ENCODE measurements at regions of chr16 and their contacts with region 1.

Region 1: GRCh38 chr16:68237243-68238028 is 1.5 kb upstream of the ESRP2 start:
- DNase-seq: peak; percentile 98
- H3K4me3 Mint-ChIP-seq: peak overlapping the region; percentile 81
- H3K27ac Mint-ChIP-seq: peak overlapping the region; percentile 94
- H3K4me1 Mint-ChIP-seq: peaks cover 16% of the 10 kb centered on the region
- H3K27me3 Mint-ChIP-seq: no peaks in the 10 kb centered on the region
- CTCF ChIP-seq: no peak

Region 2: DNA sequence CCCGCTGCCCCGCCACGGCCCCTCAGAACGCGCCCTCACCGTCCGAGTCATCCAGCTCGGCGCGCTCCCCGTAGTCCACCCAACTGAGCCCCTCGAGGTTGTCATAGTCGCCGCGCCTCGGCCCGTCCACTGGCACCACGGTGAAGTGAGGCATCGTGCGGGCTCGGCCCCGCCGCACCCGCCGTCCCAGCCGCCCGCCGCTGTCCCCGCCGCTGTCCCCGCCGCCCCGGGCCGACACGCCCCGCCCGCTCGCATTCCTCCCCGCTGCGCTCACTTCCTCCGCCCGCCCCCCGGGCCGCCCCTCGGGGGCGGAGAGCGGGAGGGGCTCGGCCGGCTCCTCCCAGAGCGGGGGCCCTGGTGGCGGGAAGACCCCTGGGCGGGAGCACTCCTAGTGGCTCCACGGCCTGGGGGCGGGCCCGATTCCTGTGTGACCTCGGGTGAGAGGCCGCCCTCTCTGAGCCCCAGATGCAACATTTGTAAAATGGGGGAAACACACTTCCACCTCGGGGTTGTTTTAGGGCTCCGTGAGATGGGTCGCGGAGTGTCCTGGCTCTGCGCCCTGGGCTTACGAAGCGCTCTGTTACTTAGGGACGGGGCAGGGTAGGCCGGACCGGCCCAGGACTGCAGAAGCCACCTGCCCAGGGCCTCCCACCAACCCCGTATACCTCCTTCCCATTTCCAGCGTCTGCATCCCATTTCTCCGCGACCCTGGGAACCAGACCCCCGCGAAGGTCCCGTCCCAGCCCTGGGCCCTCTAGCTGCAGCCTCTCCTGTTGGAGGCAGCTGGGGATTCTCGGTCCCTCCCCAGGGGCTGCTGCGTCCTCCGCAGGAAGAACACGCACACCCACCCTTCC is 268.8 kb before region 1 on chr16 and contains the start of gene SLC12A4:
- CTCF ChIA-PET with region 1: no interaction called
- POLR2A ChIA-PET with region 1: interaction called, 9 read pairs
- intact Hi-C with region 1: loop called (anchors 5 kb)
- DNase-seq: peak; percentile 72
- H3K4me3 Mint-ChIP-seq: peak within 1 kb of the TSS; percentile 82
- H3K27ac Mint-ChIP-seq: peak within 1 kb of the TSS; percentile 77
- H3K4me1 Mint-ChIP-seq: peaks cover 26% of the 10 kb centered on the region
- H3K27me3 Mint-ChIP-seq: no peaks in the 10 kb centered on the region
- CTCF ChIP-seq: no peak
- total RNA-seq, gene SLC12A4: 107 TPM in 2 replicates

Region 3: GRCh38 chr16:68085259-68086071 is 152.0 kb before region 1 on chr16 and contains the start of gene NFATC3:
- CTCF ChIA-PET with region 1: interaction called, 3 read pairs
- POLR2A ChIA-PET with region 1: interaction called, 99 read pairs
- intact Hi-C with region 1: loop called (anchors 2 kb)
- DNase-seq: peak; percentile 94
- H3K4me3 Mint-ChIP-seq: peak within 1 kb of the TSS; percentile 80
- H3K27ac Mint-ChIP-seq: peak within 1 kb of the TSS; percentile 35
- H3K4me1 Mint-ChIP-seq: peaks cover 23% of the 10 kb centered on the region
- H3K27me3 Mint-ChIP-seq: no peaks in the 10 kb centered on the region
- CTCF ChIP-seq: no peak
- total RNA-seq, gene NFATC3: 18.5 and 24.1 TPM in 2 replicates

Region 4: GRCh38 chr16:68105611-68106010 is 131.8 kb before region 1 on chr16:
- CTCF ChIA-PET with region 1: no interaction called
- POLR2A ChIA-PET with region 1: no interaction called
- intact Hi-C with region 1: no loop called
- DNase-seq: no peak
- H3K4me3 Mint-ChIP-seq: no peak overlapping the region
- H3K27ac Mint-ChIP-seq: no peak overlapping the region
- H3K4me1 Mint-ChIP-seq: peaks cover 9% of the 10 kb centered on the region
- H3K27me3 Mint-ChIP-seq: no peaks in the 10 kb centered on the region
- CTCF ChIP-seq: no peak

Region 5: DNA sequence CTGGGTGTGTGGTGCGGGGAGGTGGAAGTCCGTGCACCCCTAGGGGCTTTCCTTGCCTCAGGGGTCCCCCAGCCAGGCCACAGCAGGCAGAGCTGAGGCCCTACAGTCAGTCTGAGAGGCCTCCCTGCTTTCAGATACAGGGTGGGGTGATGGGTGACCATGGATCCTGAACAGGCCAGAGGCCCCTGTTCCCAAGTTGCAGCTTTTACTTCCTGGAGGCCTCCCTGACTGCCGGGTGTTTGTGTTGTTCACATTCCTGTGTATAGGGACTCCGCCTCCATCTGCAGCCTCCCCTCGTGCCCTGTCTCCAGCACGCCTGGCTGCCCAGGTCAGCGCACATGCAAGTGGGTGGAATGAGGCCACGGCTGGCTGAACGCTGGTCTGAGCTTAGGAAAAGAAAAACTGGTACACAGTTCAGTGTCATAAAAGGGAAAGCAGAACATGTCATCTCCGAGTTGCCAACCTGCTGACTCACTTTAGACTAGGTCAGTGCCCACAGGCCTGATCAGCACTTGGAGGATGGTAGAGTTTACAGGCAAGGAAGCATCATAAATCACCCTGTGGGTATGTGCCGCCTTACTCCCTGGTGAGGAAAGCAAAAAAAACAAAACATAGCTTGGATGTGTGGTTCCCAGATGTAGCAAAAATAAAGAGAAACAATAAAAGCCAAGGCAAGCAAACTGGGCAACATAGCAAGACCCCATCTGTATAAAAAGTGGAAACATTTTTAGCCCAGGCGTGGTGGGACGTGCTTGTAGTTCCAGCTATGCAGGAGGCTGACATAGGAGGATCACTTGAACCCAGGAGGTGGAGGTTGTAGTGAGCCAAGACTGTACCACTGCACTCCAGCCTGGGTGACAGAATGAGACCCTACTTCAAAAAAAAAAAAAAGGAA is 20.7 kb after region 1 on chr16:
- CTCF ChIA-PET with region 1: interaction called, 13 read pairs
- POLR2A ChIA-PET with region 1: interaction called, 12 read pairs
- intact Hi-C with region 1: no loop called
- DNase-seq: peak; percentile 67
- H3K4me3 Mint-ChIP-seq: no peak overlapping the region
- H3K27ac Mint-ChIP-seq: peak overlapping the region; percentile 14
- H3K4me1 Mint-ChIP-seq: peaks cover 10% of the 10 kb centered on the region
- H3K27me3 Mint-ChIP-seq: no peaks in the 10 kb centered on the region
- CTCF ChIP-seq: no peak

Region 6: GRCh38 chr16:68275611-68276191 is 38.3 kb after region 1 on chr16:
- CTCF ChIA-PET with region 1: no interaction called
- POLR2A ChIA-PET with region 1: interaction called, 10 read pairs
- intact Hi-C with region 1: no loop called
- DNase-seq: peak; percentile 71
- H3K4me3 Mint-ChIP-seq: no peak overlapping the region
- H3K27ac Mint-ChIP-seq: peak overlapping the region; percentile 77
- H3K4me1 Mint-ChIP-seq: peaks cover 20% of the 10 kb centered on the region
- H3K27me3 Mint-ChIP-seq: no peaks in the 10 kb centered on the region
- CTCF ChIP-seq: no peak

Region 7: DNA sequence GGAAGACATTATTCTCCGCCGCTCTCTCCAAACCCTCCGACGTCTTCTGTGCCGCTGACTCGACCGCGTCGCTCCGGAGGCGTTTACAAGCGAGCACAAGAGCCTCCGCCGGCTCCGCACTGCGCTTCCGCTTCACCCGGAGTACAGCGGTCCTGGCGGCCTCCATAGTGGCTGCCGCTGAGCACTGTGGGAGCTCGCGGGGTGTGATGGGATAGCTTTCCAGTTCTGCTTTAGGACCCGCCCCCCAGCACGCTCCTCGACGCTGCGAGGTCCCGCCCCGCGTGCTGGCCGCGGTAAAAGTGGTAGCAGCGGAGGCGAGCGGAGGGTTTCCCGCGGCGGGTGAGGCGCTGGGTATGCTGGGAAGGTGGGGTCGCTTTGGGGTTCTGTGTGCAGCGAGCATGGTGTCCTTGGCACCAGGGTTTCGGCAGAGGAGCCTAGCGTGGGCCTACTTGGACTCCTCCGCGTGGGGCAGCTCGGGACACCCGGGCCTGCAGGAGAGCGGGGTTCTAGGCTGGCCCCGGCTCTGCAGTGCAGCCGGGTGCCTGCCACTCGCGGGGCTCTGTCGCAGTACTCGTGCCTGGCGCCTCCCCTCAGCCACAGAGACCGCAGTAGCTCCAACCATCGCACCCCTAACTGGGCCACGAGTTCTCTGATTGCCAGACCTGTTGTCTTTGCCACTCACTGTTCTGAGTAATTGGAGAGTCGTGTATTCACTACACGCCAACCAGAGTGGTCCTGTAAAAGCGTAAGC is 73.5 kb after region 1 on chr16 and contains the starts of genes PRMT7 and SLC7A6OS:
- CTCF ChIA-PET with region 1: interaction called, 3 read pairs
- POLR2A ChIA-PET with region 1: interaction called, 55 read pairs
- intact Hi-C with region 1: no loop called
- DNase-seq: peak; percentile 90
- H3K4me3 Mint-ChIP-seq: peak within 1 kb of the TSS; percentile 97
- H3K27ac Mint-ChIP-seq: peak within 1 kb of the TSS; percentile 87
- H3K4me1 Mint-ChIP-seq: peaks cover 16% of the 10 kb centered on the region
- H3K27me3 Mint-ChIP-seq: no peaks in the 10 kb centered on the region
- CTCF ChIP-seq: no peak
- total RNA-seq, gene PRMT7: 28.0 and 33.2 TPM in 2 replicates
- total RNA-seq, gene SLC7A6OS: 19.4 and 20.4 TPM in 2 replicates

Region 8: DNA sequence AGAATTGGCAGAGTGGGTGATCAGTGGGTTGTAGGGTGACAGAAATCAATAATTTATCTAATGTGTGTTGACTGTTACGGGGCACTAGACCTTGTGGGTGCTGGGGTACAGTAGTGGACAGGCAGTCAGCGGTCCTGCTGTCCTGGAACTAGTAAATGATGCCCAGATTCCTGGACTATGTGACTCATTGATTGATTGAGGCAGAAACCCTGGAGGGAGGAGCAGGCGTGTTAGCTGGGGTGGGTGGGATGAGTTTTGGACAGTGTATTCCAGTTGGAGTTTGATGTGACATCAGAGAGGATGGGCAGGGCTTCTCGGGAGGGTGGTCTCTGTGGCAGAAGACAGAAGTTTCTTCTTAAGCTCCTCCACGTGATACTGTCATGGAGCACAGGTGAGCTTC is 97.7 kb after region 1 on chr16:
- CTCF ChIA-PET with region 1: interaction called, 3 read pairs
- POLR2A ChIA-PET with region 1: interaction called, 12 read pairs
- intact Hi-C with region 1: no loop called
- DNase-seq: peak; percentile 18
- H3K4me3 Mint-ChIP-seq: no peak overlapping the region
- H3K27ac Mint-ChIP-seq: no peak overlapping the region
- H3K4me1 Mint-ChIP-seq: peaks cover 15% of the 10 kb centered on the region
- H3K27me3 Mint-ChIP-seq: no peaks in the 10 kb centered on the region
- CTCF ChIP-seq: no peak